ENCODE measurements at regions of chr4 and their contacts with region 1.

Region 1: GRCh38 chr4:184417802-184418511 is 56.4 kb downstream of the IRF2 start:
- DNase-seq: no peak
- H3K4me3 Mint-ChIP-seq: peak overlapping the region; percentile 48
- H3K27ac Mint-ChIP-seq: peak overlapping the region; percentile 91
- H3K4me1 Mint-ChIP-seq: peaks cover 73% of the 10 kb centered on the region
- H3K27me3 Mint-ChIP-seq: no peaks in the 10 kb centered on the region

Region 2: DNA sequence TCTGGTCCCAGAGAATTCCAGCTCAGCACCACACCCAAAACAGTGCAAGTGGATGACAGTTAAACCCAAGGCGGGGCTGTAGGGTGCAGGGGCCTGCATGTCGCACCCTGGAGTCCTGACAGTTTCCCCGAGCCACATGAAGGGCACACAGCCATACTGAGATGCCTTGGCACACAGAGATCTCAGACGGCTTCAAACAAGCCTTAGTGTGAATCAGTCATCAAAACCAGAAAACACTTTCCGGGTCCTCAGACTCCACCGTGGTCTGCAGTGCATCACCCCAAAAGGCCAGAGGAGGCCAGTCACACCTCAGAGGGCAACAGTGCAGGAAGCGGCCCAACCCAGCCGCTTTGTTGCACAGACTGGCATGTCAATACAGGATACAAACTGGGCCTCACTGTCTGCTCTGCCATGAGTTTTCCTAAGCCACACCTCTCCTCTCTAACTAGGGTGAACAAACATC is 135.7 kb before region 1 on chr4:
- intact Hi-C with region 1: loop called (anchors 1 kb)
- DNase-seq: peak; percentile 52
- H3K4me3 Mint-ChIP-seq: no peak overlapping the region
- H3K27ac Mint-ChIP-seq: peak overlapping the region; percentile 92
- H3K4me1 Mint-ChIP-seq: peaks cover 63% of the 10 kb centered on the region
- H3K27me3 Mint-ChIP-seq: no peaks in the 10 kb centered on the region

Region 3: DNA sequence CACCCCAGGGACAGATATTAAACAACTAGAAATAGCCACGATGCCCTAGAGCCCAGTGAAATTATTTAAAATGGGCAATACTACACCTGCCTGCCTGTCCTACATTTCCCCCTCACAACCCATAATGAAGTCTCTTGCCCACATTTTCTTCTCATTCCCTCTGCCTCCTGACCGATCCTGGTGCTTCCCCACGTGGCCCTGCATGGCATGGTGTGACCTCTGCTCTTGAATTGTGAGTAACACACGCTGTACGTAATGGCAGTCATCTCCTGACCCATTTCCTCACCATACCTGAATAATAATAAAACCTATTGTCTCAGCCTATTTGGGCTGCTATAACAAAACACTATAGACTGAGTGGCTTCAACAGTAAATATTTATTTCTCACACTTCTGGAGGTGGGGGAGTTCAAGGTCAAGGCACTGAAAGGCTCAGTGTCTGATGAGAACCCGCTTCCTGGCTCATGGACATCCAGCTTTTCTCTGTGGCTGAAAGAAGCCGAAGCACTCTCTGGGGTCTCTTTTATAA is 123.3 kb before region 1 on chr4:
- intact Hi-C with region 1: no loop called
- DNase-seq: no peak
- H3K4me3 Mint-ChIP-seq: no peak overlapping the region
- H3K27ac Mint-ChIP-seq: no peak overlapping the region
- H3K4me1 Mint-ChIP-seq: peaks cover 8% of the 10 kb centered on the region
- H3K27me3 Mint-ChIP-seq: no peaks in the 10 kb centered on the region

Region 4: DNA sequence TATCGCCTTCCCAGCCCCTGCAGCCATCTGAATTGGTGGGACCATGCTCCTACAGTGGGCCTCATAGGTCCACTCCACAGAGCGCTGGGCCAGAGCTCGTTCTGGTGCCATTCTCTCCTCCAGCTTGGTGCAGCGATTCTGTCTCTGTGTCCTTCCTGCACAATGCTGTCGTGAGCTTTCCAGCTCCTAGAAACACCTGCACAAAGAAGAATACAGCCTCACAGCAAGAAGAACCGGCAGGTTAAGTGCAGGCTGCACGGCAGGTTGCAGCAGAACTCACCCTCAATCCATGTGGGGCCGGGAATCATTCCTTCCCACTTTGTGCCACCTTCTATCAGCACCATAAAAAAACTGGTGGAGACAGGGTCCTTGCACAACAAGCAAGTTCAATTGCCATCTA is 99.1 kb before region 1 on chr4:
- intact Hi-C with region 1: loop called (anchors 2 kb)
- DNase-seq: peak; percentile 8
- H3K4me3 Mint-ChIP-seq: no peak overlapping the region
- H3K27ac Mint-ChIP-seq: peak overlapping the region; percentile 24
- H3K4me1 Mint-ChIP-seq: peaks cover 44% of the 10 kb centered on the region
- H3K27me3 Mint-ChIP-seq: no peaks in the 10 kb centered on the region

Region 5: DNA sequence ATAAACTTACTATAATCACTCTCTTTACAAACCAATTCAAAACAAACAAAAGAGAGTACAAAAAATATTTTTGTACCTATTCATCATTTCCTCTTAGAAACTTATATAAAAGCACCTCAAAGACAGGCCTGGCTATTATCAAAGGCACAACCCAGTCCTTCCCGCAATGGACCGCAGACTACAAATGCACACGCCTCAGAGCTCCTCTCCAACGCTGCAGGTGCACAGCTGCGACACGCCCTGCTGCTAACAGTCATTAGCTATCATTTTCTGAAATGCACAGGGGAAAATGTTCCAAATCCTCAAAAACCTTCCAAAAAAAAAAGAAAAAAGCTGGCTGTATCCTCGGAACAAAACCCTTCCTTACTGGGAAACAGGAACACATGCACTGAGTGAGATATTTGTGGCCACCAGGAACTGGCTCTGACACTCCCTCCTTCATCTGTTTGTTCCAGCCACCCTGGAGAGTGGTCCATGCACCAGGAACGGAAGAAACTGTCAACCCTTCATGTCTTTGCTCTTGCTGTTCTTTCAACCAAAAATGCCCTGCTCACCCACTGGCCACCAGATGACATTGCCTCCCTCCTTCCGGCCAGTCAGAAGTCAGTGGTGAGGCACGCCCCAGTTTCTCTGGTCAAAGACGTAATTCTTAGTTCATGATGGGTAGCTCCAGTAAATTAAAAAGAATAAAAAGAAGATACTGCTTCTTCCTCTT is 39.7 kb after region 1 on chr4:
- intact Hi-C with region 1: loop called (anchors 2 kb)
- DNase-seq: no peak
- H3K4me3 Mint-ChIP-seq: no peak overlapping the region
- H3K27ac Mint-ChIP-seq: no peak overlapping the region
- H3K4me1 Mint-ChIP-seq: peaks cover 68% of the 10 kb centered on the region
- H3K27me3 Mint-ChIP-seq: no peaks in the 10 kb centered on the region

Region 6: GRCh38 chr4:184514121-184514988 is 96.4 kb after region 1 on chr4:
- intact Hi-C with region 1: loop called (anchors 1 kb)
- DNase-seq: peak; percentile 53
- H3K4me3 Mint-ChIP-seq: peak overlapping the region; percentile 66
- H3K27ac Mint-ChIP-seq: peak overlapping the region; percentile 90
- H3K4me1 Mint-ChIP-seq: peaks cover 51% of the 10 kb centered on the region
- H3K27me3 Mint-ChIP-seq: no peaks in the 10 kb centered on the region

Region 7: DNA sequence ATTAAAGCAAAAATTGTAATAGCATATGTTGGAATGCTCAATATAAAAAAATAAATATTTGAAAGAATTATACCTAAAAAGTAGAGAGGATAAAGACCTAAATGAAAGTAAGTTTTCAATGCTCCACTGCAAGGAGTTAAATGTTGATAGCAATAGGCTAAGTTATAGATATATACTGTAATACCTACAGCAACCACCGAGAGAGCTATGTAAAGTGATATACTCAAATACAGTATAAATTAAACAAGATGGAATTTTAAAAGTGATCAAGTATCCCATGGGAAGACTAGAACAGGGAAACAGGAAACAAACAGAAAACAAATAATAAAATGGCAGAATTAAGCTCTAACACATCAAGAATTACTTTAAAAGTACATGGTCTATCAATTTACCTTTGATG is 157.3 kb after region 1 on chr4:
- intact Hi-C with region 1: loop called (anchors 2 kb)
- DNase-seq: no peak
- H3K4me3 Mint-ChIP-seq: no peak overlapping the region
- H3K27ac Mint-ChIP-seq: peak overlapping the region; percentile 75
- H3K4me1 Mint-ChIP-seq: peaks cover 18% of the 10 kb centered on the region
- H3K27me3 Mint-ChIP-seq: no peaks in the 10 kb centered on the region

Region 8: DNA sequence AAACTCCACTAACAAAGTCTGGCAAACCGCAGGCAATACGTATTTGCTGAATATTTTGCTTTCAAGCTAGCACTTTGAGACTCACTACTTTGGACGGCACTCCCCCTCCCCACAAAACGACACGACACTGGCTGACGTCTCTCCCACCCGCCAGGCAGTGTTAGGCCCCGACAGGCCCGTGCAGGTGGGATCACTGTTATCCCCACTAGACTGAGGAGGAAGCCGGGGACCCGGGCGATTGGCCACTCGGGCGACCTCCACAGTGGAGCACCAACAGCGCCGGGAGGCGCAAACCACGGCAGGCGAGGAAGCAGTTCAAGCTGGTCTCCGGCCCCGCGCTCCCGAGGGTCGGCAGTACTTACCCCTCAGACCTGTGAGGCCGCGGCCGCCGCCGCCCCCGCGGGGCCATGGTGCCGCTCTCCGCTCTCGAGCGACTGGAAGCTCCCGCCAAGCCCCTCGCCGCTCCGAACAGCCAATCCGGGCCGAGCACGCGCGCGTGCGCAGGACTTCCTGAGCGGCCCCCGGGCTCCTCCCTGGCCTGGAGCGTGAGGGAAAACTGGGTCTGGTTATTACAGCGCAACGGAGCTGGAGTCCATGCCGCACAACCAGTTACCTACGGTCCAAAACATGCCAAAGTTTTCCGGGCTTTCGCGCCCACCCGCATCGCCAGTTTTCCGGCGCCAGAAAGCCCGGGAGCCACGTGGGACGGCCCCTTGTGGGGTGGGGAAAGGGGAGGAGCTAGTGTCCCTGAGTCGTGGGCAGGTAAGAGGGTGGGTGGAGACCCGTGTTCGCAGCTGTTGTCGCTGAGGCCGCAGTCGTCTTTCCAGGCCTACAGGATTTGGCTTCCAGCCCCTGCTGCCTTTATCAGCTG is 315.9 kb after region 1 on chr4 and contains the start of gene CENPU:
- intact Hi-C with region 1: loop called (anchors 5 kb)
- DNase-seq: peak; percentile 96
- H3K4me3 Mint-ChIP-seq: peak within 1 kb of the TSS; percentile 93
- H3K27ac Mint-ChIP-seq: peak within 1 kb of the TSS; percentile 87
- H3K4me1 Mint-ChIP-seq: peaks cover 37% of the 10 kb centered on the region
- H3K27me3 Mint-ChIP-seq: no peaks in the 10 kb centered on the region
- total RNA-seq, gene CENPU: 60.9 and 74.2 TPM in 2 replicates